Stomach (tissue), 19 donors: ENCODE measurements at regions of chr15 and their contacts with region 1.

Region 1: GRCh38 chr15:101641166-101641764 is 10.9 kb downstream of the TM2D3 start:
- DNase-seq: peak; percentile 81 to 91
- H3K4me3 ChIP-seq: no peak overlapping the region
- H3K27ac ChIP-seq: peak overlapping the region in 3 of 5 donors; percentile 39 to 61 (median 58)
- H3K4me1 ChIP-seq: peaks cover 0 to 29% (median 15%) of the 10 kb centered on the region in 4 donors
- H3K27me3 ChIP-seq: no peaks in the 10 kb centered on the region
- CTCF ChIP-seq: peak in 6 of 7 experiments; percentile 57 to 93 (median 88)
- EP300 ChIP-seq: no peak
- POLR2A ChIP-seq: no peak

Region 2: DNA sequence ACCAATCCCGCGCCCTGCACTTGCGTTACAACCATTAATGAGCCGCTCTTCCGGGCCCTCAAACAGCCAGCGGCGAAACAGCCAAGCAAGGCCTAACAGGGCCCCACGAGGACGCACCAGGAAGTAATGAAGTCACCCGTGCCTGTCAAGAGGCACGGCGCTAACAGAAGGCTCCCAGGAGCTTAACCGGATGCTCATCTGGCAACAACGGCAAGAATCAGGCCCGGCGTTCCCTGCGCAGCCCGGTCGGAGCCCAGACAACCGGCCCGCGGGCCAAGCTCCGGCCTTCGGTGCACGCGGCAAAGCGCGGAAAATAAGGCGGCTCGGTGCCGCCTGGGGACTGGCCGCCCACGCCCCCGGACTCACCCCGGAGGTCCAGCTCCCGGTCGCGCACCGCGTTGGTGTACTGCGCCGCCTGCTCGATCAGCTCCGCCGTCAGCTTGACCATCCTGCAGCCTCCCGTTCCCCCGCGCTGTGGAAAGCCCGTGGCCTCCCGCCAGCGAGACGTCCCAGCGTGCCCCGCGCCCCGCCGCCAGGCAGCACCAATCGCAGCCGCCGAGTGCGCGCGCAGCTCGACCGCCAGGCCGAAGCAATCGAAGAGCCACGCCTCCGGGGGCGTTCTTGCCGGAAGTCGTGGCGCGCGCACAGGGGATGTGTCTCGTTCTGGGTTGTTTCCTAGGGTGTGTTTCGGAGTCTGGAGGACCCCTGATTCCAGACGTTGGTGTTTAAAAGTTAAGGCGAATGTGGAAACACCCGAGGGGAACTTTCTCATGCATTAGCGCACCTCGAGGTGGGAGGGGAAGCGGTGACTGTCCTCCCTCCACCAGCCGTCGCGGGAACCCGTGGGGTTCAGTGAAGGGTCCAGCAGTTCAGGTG is 346.3 kb before region 1 on chr15 and contains the start of gene SNRPA1:
- intact Hi-C with region 1: loop called (anchors 5 kb)
- DNase-seq: peak; percentile 99
- H3K4me3 ChIP-seq: peak within 1 kb of the TSS; percentile 84 to 91 (median 85)
- H3K27ac ChIP-seq: peak within 1 kb of the TSS; percentile 89 to 97 (median 95)
- H3K4me1 ChIP-seq: peaks cover 14 to 46% (median 38%) of the 10 kb centered on the region in 4 donors
- H3K27me3 ChIP-seq: no peaks in the 10 kb centered on the region
- CTCF ChIP-seq: no peak
- EP300 ChIP-seq: no peak
- POLR2A ChIP-seq: peak in 2 of 4 donors; percentile 24 to 68
- total RNA-seq, gene SNRPA1: 3.5 to 75.6 (median 32.1) TPM

Region 3: GRCh38 chr15:101540480-101541239 is 100.6 kb before region 1 on chr15:
- intact Hi-C with region 1: no loop called
- DNase-seq: no peak
- H3K4me3 ChIP-seq: no peak overlapping the region
- H3K27ac ChIP-seq: no peak overlapping the region
- H3K4me1 ChIP-seq: peaks cover 0 to 6% (median 0%) of the 10 kb centered on the region in 4 donors
- H3K27me3 ChIP-seq: peaks cover 0 to 15% (median 0%) of the 10 kb centered on the region in 3 donors
- CTCF ChIP-seq: no peak
- EP300 ChIP-seq: no peak
- POLR2A ChIP-seq: no peak